Calu3 (cell line): ENCODE measurements at regions of chr5 and their contacts with region 1.

Region 1: DNA sequence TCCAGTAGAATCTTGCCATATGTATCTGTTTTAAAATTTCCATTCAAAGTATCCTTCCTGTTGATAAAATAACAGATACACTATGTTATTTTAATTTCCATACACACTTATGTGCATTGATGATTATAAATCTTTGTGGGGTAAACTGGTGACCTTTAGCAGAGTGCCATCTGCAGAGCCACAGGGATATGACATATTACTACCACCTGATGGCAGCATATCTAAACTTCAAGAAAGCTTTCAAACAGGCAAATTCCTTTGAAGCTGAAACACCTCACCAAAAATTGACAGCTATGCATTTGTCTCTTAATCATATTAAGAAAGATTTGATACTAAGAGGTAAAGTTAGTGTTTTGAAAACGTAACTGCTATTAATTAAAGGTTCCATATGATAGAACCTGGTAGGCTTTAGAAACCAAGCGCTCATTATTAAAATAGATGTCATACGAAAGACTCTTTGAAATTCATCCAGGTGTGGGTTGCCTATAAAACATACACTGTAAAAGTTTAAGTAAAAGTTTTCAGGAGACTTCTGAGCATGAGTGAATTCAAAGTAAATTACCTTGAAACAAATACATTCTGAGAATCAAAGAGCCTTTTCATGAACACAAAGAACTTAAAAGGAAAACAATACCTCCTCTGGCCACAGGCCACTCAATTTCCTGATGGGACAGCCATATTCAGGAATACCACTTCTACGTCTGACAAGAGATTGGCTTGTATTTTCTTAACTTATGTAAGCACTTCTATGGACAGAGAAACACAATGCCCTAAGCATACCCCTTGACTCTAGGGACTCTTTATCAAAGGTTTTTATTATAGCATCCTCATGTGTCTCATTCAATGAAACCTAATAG is 93.3 kb downstream of the KIAA0825 start:
- DNase-seq: peak; percentile 24
- H3K4me3 Mint-ChIP-seq: no peak overlapping the region
- H3K27ac Mint-ChIP-seq: no peak overlapping the region
- H3K4me1 Mint-ChIP-seq: no peaks in the 10 kb centered on the region
- H3K27me3 Mint-ChIP-seq: no peaks in the 10 kb centered on the region
- CTCF ChIP-seq: peak; percentile 52

Region 2: DNA sequence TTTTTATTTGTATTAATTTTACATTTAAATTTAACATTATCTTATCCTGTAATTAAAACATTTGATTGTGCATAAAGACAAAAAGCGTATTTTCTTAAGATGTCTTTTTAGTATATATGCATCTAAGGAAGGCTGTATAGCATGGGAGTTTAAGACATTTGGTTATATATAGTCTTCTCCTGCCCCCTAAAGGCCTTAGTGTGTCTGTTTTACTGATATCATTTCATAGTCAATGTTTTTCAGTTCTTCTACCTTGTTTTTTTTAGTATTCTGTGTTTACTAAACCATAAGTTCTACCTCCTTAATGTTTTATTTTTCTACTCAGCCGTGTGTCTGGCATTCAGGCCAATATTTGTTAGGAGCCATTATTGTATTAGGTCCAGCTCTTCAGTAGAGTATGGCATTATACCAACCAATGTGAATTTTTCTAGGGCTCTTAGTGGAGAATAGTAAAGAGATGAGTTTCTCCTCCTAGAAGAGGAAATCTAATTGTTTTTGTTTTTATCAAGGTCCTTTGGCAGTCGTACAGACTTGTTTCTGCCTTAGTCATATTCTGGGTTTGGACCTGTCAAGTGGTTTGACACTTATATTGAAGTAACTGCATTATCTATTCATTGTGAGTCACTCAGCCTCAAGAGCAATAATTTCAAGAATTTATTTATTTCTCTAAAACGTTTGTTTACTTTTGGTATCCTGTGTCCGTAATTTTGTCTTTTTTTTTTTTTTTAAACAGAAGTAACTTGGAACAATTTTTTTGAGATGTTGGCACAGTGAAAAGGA is 168.2 kb after region 1 on chr5:
- CTCF ChIA-PET with region 1: no interaction called
- intact Hi-C with region 1: loop called (anchors 2 kb)
- DNase-seq: no peak
- H3K4me3 Mint-ChIP-seq: no peak overlapping the region
- H3K27ac Mint-ChIP-seq: no peak overlapping the region
- H3K4me1 Mint-ChIP-seq: no peaks in the 10 kb centered on the region
- H3K27me3 Mint-ChIP-seq: no peaks in the 10 kb centered on the region
- CTCF ChIP-seq: no peak

Region 3: GRCh38 chr5:94740286-94740685 is 215.2 kb after region 1 on chr5:
- CTCF ChIA-PET with region 1: interaction called, 15 read pairs
- intact Hi-C with region 1: loop called (anchors 1 kb)
- DNase-seq: no peak
- H3K4me3 Mint-ChIP-seq: no peak overlapping the region
- H3K27ac Mint-ChIP-seq: no peak overlapping the region
- H3K4me1 Mint-ChIP-seq: no peaks in the 10 kb centered on the region
- H3K27me3 Mint-ChIP-seq: no peaks in the 10 kb centered on the region
- CTCF ChIP-seq: no peak

Region 4: DNA sequence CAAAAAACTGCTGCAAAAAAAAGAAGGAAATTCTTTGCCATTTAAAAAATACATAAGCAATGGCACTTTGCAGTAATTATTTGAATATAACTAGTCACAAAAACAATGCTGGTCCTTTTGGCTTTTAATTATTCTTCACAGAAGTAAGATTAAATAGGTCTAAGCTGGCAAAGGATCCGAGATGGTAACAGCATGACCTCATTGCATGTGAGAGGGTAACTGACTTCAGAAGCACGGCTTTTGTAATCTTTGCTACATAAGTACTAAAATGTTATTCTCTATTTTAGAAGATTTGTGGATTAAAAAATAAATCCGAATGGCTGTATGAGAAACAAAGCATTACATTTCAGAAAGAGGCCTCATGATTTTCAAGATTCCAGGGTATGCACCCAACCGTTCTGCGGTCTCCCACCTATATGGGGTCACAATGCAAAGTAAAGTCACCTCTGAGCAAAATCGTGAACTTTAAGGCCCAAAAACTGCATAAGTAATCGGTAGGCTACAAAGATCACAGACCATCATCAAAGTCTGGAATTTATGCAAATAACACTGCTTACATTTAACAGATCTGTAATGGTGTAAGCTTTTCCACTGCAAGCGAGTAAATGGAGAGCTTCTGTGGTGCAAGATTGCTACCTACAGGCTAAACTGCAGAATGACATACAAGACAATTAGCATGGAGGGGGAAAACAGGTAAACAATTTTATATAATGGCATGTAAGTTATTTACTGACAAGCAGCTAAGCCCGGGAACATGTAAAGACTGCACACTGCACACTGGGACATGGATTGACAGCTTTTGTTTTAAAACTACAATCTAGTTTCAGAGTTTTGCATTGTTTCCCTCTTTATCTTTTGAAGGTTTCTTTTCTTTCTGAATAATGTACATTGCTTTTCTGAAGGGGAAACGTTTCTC is 325.0 kb after region 1 on chr5:
- CTCF ChIA-PET with region 1: interaction called, 6 read pairs
- intact Hi-C with region 1: loop called (anchors 1 kb)
- DNase-seq: peak; percentile 19
- H3K4me3 Mint-ChIP-seq: no peak overlapping the region
- H3K27ac Mint-ChIP-seq: no peak overlapping the region
- H3K4me1 Mint-ChIP-seq: no peaks in the 10 kb centered on the region
- H3K27me3 Mint-ChIP-seq: no peaks in the 10 kb centered on the region
- CTCF ChIP-seq: peak; percentile 62

Region 5: GRCh38 chr5:94908889-94909480 is 383.9 kb after region 1 on chr5:
- CTCF ChIA-PET with region 1: no interaction called
- intact Hi-C with region 1: loop called (anchors 5 kb)
- DNase-seq: peak; percentile 46
- H3K4me3 Mint-ChIP-seq: no peak overlapping the region
- H3K27ac Mint-ChIP-seq: no peak overlapping the region
- H3K4me1 Mint-ChIP-seq: no peaks in the 10 kb centered on the region
- H3K27me3 Mint-ChIP-seq: no peaks in the 10 kb centered on the region
- CTCF ChIP-seq: peak; percentile 64